HEK293 (cell line): ENCODE measurements at regions of chr6 and their contacts with region 1.

Region 1: DNA sequence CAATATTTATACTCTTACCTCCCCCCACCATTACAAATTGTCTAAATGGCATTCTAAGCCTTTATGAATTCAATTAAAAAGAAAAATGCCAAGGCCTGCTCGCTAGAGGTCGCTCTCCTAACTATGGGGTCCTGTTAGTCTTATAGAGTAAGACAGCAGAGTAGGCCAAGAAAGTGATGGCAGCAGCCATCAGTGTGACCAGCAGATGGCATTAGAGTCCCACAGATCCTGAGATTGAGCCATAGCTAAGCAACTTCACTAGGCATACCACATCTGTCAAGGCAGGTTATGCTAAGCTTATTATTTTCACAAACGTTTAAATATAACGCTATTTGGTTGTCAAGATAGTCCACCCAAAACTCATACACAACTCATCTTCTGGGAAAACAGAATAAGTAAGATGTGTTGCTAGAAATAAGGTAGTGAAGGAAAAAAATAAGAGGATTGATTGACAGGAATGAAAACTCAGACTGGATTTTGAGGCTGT is 57.6 kb upstream of the SCAF8 start:
- H3K4me3 ChIP-seq: no peak overlapping the region
- H3K27ac ChIP-seq: no peak overlapping the region
- H3K4me1 ChIP-seq: no peaks in the 10 kb centered on the region
- CTCF ChIP-seq: peak; percentile 95

Region 2: GRCh38 chr6:154156135-154156896 is 519.3 kb before region 1 on chr6:
- CTCF ChIA-PET with region 1: interaction called, 15 read pairs
- POLR2A ChIA-PET with region 1: no interaction called
- H3K4me3 ChIP-seq: no peak overlapping the region
- H3K27ac ChIP-seq: no peak overlapping the region
- H3K4me1 ChIP-seq: no peaks in the 10 kb centered on the region
- CTCF ChIP-seq: peak; percentile 67

Region 3: GRCh38 chr6:154664287-154664686 is 11.4 kb before region 1 on chr6:
- CTCF ChIA-PET with region 1: interaction called, 19 read pairs
- POLR2A ChIA-PET with region 1: no interaction called
- H3K4me3 ChIP-seq: no peak overlapping the region
- H3K27ac ChIP-seq: no peak overlapping the region
- H3K4me1 ChIP-seq: no peaks in the 10 kb centered on the region
- CTCF ChIP-seq: no peak

Region 4: DNA sequence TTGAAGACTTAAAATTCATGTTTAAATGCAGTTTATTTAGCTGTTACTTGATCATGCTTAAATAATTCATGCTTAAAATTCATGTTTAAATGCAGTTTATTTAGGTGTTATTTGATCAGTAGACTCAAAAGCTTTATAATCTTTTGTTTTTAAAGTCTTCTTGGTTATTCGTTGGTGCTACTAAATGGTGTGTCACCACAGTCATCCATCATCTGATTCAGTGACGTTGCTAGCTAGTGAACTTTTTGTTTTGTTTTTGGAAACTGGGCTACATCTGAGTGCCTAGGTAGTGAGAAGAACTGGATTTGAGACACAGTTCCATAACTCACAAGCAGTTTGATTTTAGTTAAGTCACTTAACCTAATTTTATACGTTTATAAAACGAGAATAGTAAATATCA is 78.5 kb after region 1 on chr6:
- CTCF ChIA-PET with region 1: interaction called, 12 read pairs
- POLR2A ChIA-PET with region 1: no interaction called
- H3K4me3 ChIP-seq: no peak overlapping the region
- H3K27ac ChIP-seq: no peak overlapping the region
- H3K4me1 ChIP-seq: peaks cover 12% of the 10 kb centered on the region
- CTCF ChIP-seq: no peak

Region 5: GRCh38 chr6:154848580-154848979 is 172.9 kb after region 1 on chr6:
- CTCF ChIA-PET with region 1: interaction called, 11 read pairs
- POLR2A ChIA-PET with region 1: no interaction called
- H3K4me3 ChIP-seq: no peak overlapping the region
- H3K27ac ChIP-seq: no peak overlapping the region
- H3K4me1 ChIP-seq: peaks cover 29% of the 10 kb centered on the region
- CTCF ChIP-seq: no peak

Region 6: GRCh38 chr6:154928325-154928922 is 252.8 kb after region 1 on chr6:
- CTCF ChIA-PET with region 1: interaction called, 36 read pairs
- POLR2A ChIA-PET with region 1: no interaction called
- H3K4me3 ChIP-seq: no peak overlapping the region
- H3K27ac ChIP-seq: no peak overlapping the region
- H3K4me1 ChIP-seq: peaks cover 6% of the 10 kb centered on the region; the same call in 1 of the 2 replicates
- CTCF ChIP-seq: peak; percentile 60

Region 7: DNA sequence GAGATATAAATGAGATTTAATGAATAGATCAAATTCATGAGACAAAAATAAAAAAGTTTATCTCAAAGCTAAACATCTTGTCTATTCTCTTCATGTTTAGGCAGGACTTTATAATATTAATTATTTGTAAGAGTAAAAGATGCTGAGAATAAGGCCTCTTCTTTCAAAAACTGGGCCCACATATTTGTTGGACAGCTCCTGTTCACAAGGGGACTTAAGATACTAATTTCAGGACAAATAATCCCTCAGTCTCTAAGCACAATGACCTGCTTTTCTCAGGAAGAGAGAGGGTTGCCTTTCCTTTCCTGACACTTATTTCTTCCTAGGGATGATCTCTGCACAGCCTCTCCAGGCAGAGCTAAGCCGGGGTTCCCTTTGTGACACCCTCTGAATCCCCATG is 736.7 kb after region 1 on chr6:
- CTCF ChIA-PET with region 1: no interaction called
- POLR2A ChIA-PET with region 1: no interaction called
- H3K4me3 ChIP-seq: no peak overlapping the region
- H3K27ac ChIP-seq: no peak overlapping the region
- H3K4me1 ChIP-seq: no peaks in the 10 kb centered on the region
- CTCF ChIP-seq: no peak